ENCODE measurements at regions of chr14 and their contacts with region 1.

Region 1: GRCh38 chr14:99683619-99684355 is at the start of gene CYP46A1:
- DNase-seq: peak; percentile 100
- H3K4me3 Mint-ChIP-seq: peak within 1 kb of the TSS; percentile 90
- H3K27ac Mint-ChIP-seq: peak within 1 kb of the TSS; percentile 87
- H3K4me1 Mint-ChIP-seq: peaks cover 17% of the 10 kb centered on the region
- H3K27me3 Mint-ChIP-seq: peaks cover 35% of the 10 kb centered on the region
- total RNA-seq, gene CYP46A1: 0.02 and 0.05 TPM in 2 replicates

Region 2: GRCh38 chr14:99604283-99604765 is 79.5 kb before region 1 on chr14:
- intact Hi-C with region 1: loop called (anchors 1 kb)
- DNase-seq: peak; percentile 99
- H3K4me3 Mint-ChIP-seq: peak overlapping the region; percentile 84
- H3K27ac Mint-ChIP-seq: peak overlapping the region; percentile 91
- H3K4me1 Mint-ChIP-seq: peaks cover 22% of the 10 kb centered on the region
- H3K27me3 Mint-ChIP-seq: peaks cover 12% of the 10 kb centered on the region

Region 3: GRCh38 chr14:99636487-99636886 is 47.3 kb before region 1 on chr14:
- intact Hi-C with region 1: no loop called
- DNase-seq: no peak
- H3K4me3 Mint-ChIP-seq: no peak overlapping the region
- H3K27ac Mint-ChIP-seq: no peak overlapping the region
- H3K4me1 Mint-ChIP-seq: no peaks in the 10 kb centered on the region
- H3K27me3 Mint-ChIP-seq: peaks cover 3% of the 10 kb centered on the region

Region 4: DNA sequence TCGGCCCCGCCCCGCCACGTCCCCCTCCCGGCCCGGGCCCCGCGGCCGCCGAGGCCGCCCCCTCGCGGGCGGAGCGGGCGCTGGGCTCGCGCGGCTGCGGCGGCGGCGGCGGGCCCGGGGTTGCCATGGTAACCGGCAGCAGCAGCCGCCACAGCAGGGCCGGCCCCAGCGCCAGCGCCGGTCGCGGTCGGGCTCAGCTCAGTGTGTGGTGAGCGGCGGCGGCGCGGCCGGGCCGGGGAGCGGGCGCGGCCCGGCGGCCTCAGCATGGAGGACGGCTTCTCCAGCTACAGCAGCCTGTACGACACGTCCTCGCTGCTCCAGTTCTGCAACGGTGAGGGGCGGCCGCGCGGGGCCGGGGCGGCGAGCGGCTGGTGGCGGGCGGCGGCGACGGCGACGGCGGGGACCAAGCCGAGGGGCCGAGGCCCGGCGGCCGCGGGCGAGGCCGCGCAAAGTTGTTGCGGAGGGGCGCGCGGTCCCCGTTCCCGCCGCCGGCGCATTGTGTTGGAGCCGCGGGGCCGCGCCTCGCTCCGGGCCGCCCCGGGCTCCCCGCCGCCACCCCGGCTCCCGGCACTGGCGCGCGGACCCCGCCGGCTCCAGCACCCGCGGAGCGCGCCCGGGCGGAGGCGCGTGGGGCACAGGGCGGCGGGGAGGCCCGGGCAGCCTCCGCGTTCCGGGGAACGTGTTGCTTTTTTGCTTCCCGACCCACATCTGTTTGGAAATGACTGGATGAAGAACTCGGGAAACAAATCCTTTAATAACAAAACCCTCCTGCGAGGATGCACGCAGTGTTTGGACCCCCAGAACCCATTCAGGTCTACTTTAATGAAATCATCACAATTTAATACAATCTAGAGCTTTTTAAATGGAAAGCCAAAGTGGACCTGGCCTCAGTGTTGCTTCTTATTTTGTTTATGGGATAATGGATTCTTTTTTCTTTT is 109.7 kb after region 1 on chr14 and contains the start of gene EML1:
- intact Hi-C with region 1: loop called (anchors 5 kb)
- DNase-seq: peak; percentile 93
- H3K4me3 Mint-ChIP-seq: peak within 1 kb of the TSS; percentile 59
- H3K27ac Mint-ChIP-seq: peak within 1 kb of the TSS; percentile 46
- H3K4me1 Mint-ChIP-seq: peaks cover 14% of the 10 kb centered on the region
- H3K27me3 Mint-ChIP-seq: peaks cover 66% of the 10 kb centered on the region
- total RNA-seq, gene EML1: 0.98 and 1.8 TPM in 2 replicates

Region 5: GRCh38 chr14:99884834-99885648 is 201.3 kb after region 1 on chr14:
- intact Hi-C with region 1: loop called (anchors 1 kb)
- DNase-seq: peak; percentile 79
- H3K4me3 Mint-ChIP-seq: no peak overlapping the region
- H3K27ac Mint-ChIP-seq: no peak overlapping the region
- H3K4me1 Mint-ChIP-seq: no peaks in the 10 kb centered on the region
- H3K27me3 Mint-ChIP-seq: peaks cover 5% of the 10 kb centered on the region

Measured in activated CD4-positive, alpha-beta T cell treated with anti-CD3 and anti-CD28 coated beads, Interleukin-2, amount 10 ng/mL, durations not matched to agents 24 days and 14 days (primary cell).